ENCODE measurements at regions of chr7 and their contacts with region 1.

Region 1: DNA sequence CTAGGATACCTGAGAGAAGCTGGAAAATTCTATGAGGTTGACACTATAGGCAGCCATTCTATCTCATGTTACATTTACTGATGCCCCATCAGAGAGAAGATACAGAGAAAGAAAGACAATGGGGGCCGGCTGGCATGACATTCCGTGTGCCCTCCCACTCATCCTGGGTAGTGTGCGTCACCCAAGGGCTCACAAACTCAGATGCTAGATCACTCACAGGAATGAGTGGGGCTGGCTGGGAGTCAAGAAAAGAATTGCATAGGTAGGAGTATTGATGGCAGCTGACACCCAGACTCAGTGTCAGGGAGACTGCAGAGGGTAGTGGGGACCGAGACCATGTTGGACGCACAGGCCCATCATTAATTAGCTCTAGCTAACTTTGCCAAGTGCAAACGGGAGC is 1113.5 kb upstream of the AUTS2 start:
- DNase-seq: no peak
- ATAC-seq: no peak
- H3K4me3 ChIP-seq: no peak overlapping the region
- H3K4me3 Mint-ChIP-seq: no peak overlapping the region
- H3K27ac ChIP-seq: no peak overlapping the region
- H3K27ac Mint-ChIP-seq: no peak overlapping the region
- H3K4me1 ChIP-seq: no peaks in the 10 kb centered on the region
- H3K4me1 Mint-ChIP-seq: no peaks in the 10 kb centered on the region
- H3K27me3 ChIP-seq: no peaks in the 10 kb centered on the region
- H3K27me3 Mint-ChIP-seq: no peaks in the 10 kb centered on the region
- CTCF ChIP-seq: no peak

Region 2: DNA sequence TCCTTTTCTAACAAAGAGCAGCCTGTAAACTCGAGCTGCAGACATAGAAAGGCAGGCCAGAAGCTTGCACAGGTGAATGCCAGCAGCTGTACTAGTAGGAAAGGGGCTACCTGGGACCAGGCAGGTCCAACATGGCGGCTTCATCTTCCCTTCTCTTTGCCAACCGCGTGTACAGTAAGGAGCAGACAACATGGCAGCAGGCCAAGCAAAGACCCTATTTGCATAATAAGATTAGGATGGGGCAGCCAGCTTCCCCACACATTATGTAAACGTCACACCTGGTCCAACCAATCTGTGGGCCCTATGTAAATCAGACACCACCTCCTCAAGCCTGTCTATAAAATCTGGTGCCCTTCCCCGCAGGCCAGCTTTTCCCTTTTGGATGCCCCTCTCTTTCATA is 73.0 kb before region 1 on chr7:
- CTCF ChIA-PET with region 1: no interaction called
- POLR2A ChIA-PET with region 1: no interaction called
- intact Hi-C with region 1: no loop called
- DNase-seq: no peak
- ATAC-seq: no peak
- H3K4me3 ChIP-seq: no peak overlapping the region
- H3K4me3 Mint-ChIP-seq: no peak overlapping the region
- H3K27ac ChIP-seq: no peak overlapping the region
- H3K27ac Mint-ChIP-seq: no peak overlapping the region
- H3K4me1 ChIP-seq: no peaks in the 10 kb centered on the region
- H3K4me1 Mint-ChIP-seq: no peaks in the 10 kb centered on the region
- H3K27me3 ChIP-seq: no peaks in the 10 kb centered on the region
- H3K27me3 Mint-ChIP-seq: no peaks in the 10 kb centered on the region
- CTCF ChIP-seq: no peak

Region 3: GRCh38 chr7:68434857-68435256 is 49.9 kb before region 1 on chr7:
- CTCF ChIA-PET with region 1: no interaction called
- POLR2A ChIA-PET with region 1: no interaction called
- intact Hi-C with region 1: loop called in 1 of 2 experiments (anchors 5 kb)
- DNase-seq: no peak
- ATAC-seq: no peak
- H3K4me3 ChIP-seq: no peak overlapping the region
- H3K4me3 Mint-ChIP-seq: no peak overlapping the region
- H3K27ac ChIP-seq: no peak overlapping the region
- H3K27ac Mint-ChIP-seq: no peak overlapping the region
- H3K4me1 ChIP-seq: no peaks in the 10 kb centered on the region
- H3K4me1 Mint-ChIP-seq: no peaks in the 10 kb centered on the region
- H3K27me3 ChIP-seq: no peaks in the 10 kb centered on the region
- H3K27me3 Mint-ChIP-seq: no peaks in the 10 kb centered on the region
- CTCF ChIP-seq: no peak

Region 4: GRCh38 chr7:69318794-69319193 is 834.1 kb after region 1 on chr7:
- CTCF ChIA-PET with region 1: no interaction called
- POLR2A ChIA-PET with region 1: no interaction called
- intact Hi-C with region 1: no loop called
- DNase-seq: no peak
- ATAC-seq: no peak
- H3K4me3 ChIP-seq: no peak overlapping the region
- H3K4me3 Mint-ChIP-seq: no peak overlapping the region
- H3K27ac ChIP-seq: no peak overlapping the region
- H3K27ac Mint-ChIP-seq: no peak overlapping the region
- H3K4me1 ChIP-seq: no peaks in the 10 kb centered on the region
- H3K4me1 Mint-ChIP-seq: no peaks in the 10 kb centered on the region
- H3K27me3 ChIP-seq: no peaks in the 10 kb centered on the region
- H3K27me3 Mint-ChIP-seq: peaks cover 3% of the 10 kb centered on the region
- CTCF ChIP-seq: no peak

Measured in CD8-positive, alpha-beta T cell (primary cell).